Ascending aorta (tissue), 2 donors: ENCODE measurements at regions of chr20 and their contacts with region 1.

Region 1: GRCh38 chr20:4956200-4956810 is 45.0 kb downstream of the SLC23A2 start:
- DNase-seq: no peak
- H3K4me3 ChIP-seq: no peak overlapping the region
- H3K27ac ChIP-seq: no peak overlapping the region
- H3K4me1 ChIP-seq: no peaks in the 10 kb centered on the region
- H3K27me3 ChIP-seq: no peaks in the 10 kb centered on the region
- CTCF ChIP-seq: peak; percentile 61 to 83 (median 82)

Region 2: GRCh38 chr20:4607287-4607713 is 349.0 kb before region 1 on chr20:
- intact Hi-C with region 1: loop called (anchors 10 kb)
- DNase-seq: peak in 1 of 2 donors; percentile 75
- H3K4me3 ChIP-seq: no peak overlapping the region
- H3K27ac ChIP-seq: no peak overlapping the region
- H3K4me1 ChIP-seq: no peaks in the 10 kb centered on the region
- H3K27me3 ChIP-seq: no peaks in the 10 kb centered on the region
- CTCF ChIP-seq: peak; percentile 88 to 95 (median 90)

Region 3: DNA sequence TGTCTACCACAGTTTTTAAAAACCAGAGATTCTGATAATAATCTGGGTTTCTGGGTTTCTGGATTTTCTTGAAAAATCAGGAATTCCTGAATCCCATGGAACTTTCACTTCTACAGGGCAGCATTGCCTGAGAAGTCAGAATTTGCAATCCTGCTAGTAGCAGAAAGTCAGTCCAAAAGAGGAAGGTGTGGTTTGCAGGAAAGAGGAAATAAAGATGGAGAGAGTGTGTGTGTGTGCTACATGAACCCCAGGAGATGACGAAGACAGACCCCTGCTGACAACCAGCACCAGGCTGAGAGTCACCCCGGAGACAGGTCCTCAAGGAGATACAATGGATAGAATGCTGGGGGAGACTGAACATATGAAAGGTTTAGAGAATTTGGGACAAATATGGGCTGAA is 189.7 kb before region 1 on chr20:
- intact Hi-C with region 1: no loop called
- DNase-seq: no peak
- H3K4me3 ChIP-seq: no peak overlapping the region
- H3K27ac ChIP-seq: no peak overlapping the region
- H3K4me1 ChIP-seq: no peaks in the 10 kb centered on the region
- H3K27me3 ChIP-seq: no peaks in the 10 kb centered on the region
- CTCF ChIP-seq: no peak

Region 4: DNA sequence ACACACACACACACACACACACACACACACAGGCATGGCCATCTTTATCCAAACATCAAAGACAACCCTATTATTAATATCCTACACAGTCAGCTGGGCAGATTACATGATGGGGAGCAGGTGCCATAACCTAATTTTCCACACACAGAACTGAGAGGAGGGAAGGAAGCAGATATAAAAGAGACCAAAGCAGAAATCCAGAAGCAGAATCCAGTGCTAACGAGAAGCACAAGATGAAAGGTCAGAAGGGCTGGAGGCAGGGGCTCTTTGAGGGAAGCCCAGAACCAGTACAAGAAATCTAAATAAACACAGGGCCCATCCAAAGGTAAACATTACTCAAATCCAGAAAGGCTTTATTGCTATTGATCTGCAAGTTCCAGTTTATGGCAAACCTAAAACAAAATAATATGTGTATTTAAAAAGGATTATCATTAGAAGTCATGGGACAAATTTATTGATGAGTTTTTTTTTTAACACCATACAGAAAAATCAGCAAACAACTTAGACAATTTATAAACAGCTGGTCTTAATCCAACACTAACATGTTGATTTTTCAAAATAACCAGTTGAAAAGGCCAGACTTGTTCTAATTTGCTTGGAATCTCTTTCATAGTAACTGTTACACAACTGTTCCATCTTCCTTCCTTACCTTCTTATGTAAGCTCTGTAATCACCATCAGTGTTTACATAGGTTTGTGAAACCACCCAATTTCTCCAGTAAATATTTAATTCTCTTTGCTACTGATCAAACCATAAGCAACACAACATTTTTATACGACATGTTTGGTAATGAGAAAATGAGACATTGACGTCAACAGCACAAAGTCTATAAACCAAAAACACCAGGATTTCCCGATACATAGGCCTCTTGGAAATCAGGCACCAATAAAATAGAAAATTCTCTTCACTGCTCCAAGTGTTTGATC is 10.8 kb after region 1 on chr20:
- intact Hi-C with region 1: no loop called
- DNase-seq: no peak
- H3K4me3 ChIP-seq: no peak overlapping the region
- H3K27ac ChIP-seq: no peak overlapping the region
- H3K4me1 ChIP-seq: no peaks in the 10 kb centered on the region
- H3K27me3 ChIP-seq: no peaks in the 10 kb centered on the region
- CTCF ChIP-seq: no peak

Region 5: GRCh38 chr20:5100684-5101347 is 144.5 kb after region 1 on chr20:
- intact Hi-C with region 1: loop called (anchors 2 kb)
- DNase-seq: peak in 1 of 2 donors; percentile 88
- H3K4me3 ChIP-seq: no peak overlapping the region
- H3K27ac ChIP-seq: peak overlapping the region in 1 of 2 donors; percentile 49
- H3K4me1 ChIP-seq: peaks cover 0 to 3% of the 10 kb centered on the region in 2 donors
- H3K27me3 ChIP-seq: no peaks in the 10 kb centered on the region
- CTCF ChIP-seq: peak; percentile 79 to 88 (median 86)